Dorsolateral prefrontal cortex (tissue), 120 donors: ENCODE measurements at regions of chr19 and their contacts with region 1.

Region 1: GRCh38 chr19:56252699-56253422 is 19.7 kb upstream of the EDDM13 start:
- DNase-seq: peak; percentile 30 to 64 (median 48)
- H3K4me3 ChIP-seq: no peak overlapping the region
- H3K27ac ChIP-seq: no peak overlapping the region
- H3K27me3 ChIP-seq: no peaks in the 10 kb centered on the region
- CTCF ChIP-seq: peak; percentile 29 to 86 (median 64)

Region 2: GRCh38 chr19:56189785-56190184 is 63.1 kb before region 1 on chr19:
- intact Hi-C with region 1: no loop called
- DNase-seq: no peak
- H3K4me3 ChIP-seq: no peak overlapping the region
- H3K27ac ChIP-seq: no peak overlapping the region
- H3K27me3 ChIP-seq: peaks cover 0 to 6% (median 0%) of the 10 kb centered on the region in 45 donors
- CTCF ChIP-seq: no peak

Region 3: GRCh38 chr19:56314562-56315077 is 61.8 kb after region 1 on chr19 and contains the start of gene ZSCAN5A:
- intact Hi-C with region 1: loop called in 1 of 2 experiments (anchors 5 kb)
- DNase-seq: peak; percentile 96 to 98 (median 98)
- H3K4me3 ChIP-seq: peak within 1 kb of the TSS; percentile 57 to 97 (median 82)
- H3K27ac ChIP-seq: peak within 1 kb of the TSS; percentile 84 to 100 (median 98)
- H3K27me3 ChIP-seq: no peaks in the 10 kb centered on the region
- CTCF ChIP-seq: peak in 2 of 56 donors; percentile 14 to 18
- total RNA-seq, gene ZSCAN5A: 9.6 to 36.8 (median 16.9) TPM